Upper lobe of right lung (tissue), 1 donor: ENCODE measurements at regions of chr2 and their contacts with region 1.

Region 1: DNA sequence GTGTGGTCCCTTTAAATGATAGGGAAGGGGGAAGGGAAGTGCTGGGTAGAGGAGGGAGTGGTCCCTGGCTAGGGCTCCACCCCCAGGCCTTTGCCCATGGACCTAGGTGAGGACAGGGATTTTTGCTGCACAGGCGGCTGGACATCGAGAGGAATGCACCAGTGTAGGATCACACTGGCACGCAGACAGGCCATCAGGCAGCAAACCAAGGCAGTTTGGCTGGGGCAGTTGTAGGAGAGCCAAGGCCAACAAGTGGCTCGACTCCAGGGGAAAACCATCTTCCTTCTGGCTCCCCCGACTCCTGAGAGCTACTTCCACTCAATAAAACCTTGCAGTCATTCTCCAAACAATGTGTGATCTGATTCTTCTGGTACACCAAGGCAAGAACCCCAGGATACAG is 402.0 kb upstream of the LRRTM1 start:
- DNase-seq: no peak
- ATAC-seq: no peak
- H3K4me3 ChIP-seq: no peak overlapping the region
- H3K27ac ChIP-seq: no peak overlapping the region
- H3K4me1 ChIP-seq: no peaks in the 10 kb centered on the region
- H3K27me3 ChIP-seq: no peaks in the 10 kb centered on the region
- CTCF ChIP-seq: no peak

Region 2: GRCh38 chr2:80086831-80087230 is 619.7 kb before region 1 on chr2:
- intact Hi-C with region 1: no loop called
- DNase-seq: no peak
- ATAC-seq: no peak
- H3K4me3 ChIP-seq: no peak overlapping the region
- H3K27ac ChIP-seq: no peak overlapping the region
- H3K4me1 ChIP-seq: no peaks in the 10 kb centered on the region
- H3K27me3 ChIP-seq: no peaks in the 10 kb centered on the region
- CTCF ChIP-seq: no peak

Region 3: DNA sequence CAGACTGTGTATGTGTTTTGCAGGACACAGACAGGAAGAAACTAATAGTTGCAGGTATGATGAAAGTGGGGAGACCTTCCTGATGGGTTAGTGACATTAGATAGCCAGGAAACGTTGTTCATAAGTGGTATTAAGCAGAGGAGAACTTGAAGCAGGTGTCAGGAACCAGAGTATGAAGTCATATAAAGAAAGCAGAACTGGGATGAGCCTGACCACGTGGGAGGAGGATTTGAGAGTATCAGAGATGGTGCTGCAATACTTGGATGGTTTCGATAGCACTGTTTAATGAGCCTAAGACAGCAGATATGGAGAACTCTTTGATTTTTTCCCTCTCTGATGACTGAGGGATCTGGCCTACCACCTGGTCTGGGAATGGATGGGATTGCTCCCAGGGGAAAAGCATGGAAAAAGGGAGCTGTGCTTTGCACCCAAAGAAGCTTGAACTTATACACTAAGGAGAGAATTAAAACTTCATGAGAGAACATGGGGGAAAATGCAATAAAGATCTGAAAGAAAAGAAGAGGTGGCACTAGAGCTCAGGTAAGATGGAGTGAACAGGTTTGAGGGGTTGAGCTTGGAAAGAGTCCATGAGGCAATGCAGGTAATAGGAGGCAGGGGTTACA is 176.0 kb before region 1 on chr2:
- intact Hi-C with region 1: no loop called
- DNase-seq: no peak
- ATAC-seq: no peak
- H3K4me3 ChIP-seq: no peak overlapping the region
- H3K27ac ChIP-seq: no peak overlapping the region
- H3K4me1 ChIP-seq: no peaks in the 10 kb centered on the region
- H3K27me3 ChIP-seq: no peaks in the 10 kb centered on the region
- CTCF ChIP-seq: no peak

Region 4: DNA sequence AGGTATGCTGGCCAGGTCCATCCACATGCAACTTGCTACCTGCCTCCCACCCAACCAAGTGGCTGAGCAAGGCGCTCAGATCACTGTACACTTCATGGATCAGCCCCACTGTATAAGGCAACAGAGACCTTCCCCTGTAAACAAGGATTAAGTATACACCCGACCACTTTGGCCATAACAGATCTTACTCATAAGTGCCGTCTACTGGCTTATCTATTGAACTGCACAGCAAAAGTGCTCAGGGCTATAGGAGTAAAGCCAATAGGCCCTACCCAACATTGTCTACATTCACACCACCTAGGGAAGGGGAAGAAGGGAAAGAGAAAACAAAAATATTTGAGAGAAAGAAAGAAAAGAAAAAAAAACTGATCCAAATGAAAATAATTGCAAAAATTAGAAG is 261.9 kb after region 1 on chr2:
- intact Hi-C with region 1: loop called (anchors 10 kb)
- DNase-seq: no peak
- ATAC-seq: peak; percentile 19
- H3K4me3 ChIP-seq: no peak overlapping the region
- H3K27ac ChIP-seq: no peak overlapping the region
- H3K4me1 ChIP-seq: no peaks in the 10 kb centered on the region
- H3K27me3 ChIP-seq: no peaks in the 10 kb centered on the region
- CTCF ChIP-seq: no peak